Activated CD8-positive, alpha-beta T cell treated with anti-CD3 and anti-CD28 coated beads for 36 hours (primary cell): ENCODE measurements at regions of chr2 and their contacts with region 1.

Region 1: DNA sequence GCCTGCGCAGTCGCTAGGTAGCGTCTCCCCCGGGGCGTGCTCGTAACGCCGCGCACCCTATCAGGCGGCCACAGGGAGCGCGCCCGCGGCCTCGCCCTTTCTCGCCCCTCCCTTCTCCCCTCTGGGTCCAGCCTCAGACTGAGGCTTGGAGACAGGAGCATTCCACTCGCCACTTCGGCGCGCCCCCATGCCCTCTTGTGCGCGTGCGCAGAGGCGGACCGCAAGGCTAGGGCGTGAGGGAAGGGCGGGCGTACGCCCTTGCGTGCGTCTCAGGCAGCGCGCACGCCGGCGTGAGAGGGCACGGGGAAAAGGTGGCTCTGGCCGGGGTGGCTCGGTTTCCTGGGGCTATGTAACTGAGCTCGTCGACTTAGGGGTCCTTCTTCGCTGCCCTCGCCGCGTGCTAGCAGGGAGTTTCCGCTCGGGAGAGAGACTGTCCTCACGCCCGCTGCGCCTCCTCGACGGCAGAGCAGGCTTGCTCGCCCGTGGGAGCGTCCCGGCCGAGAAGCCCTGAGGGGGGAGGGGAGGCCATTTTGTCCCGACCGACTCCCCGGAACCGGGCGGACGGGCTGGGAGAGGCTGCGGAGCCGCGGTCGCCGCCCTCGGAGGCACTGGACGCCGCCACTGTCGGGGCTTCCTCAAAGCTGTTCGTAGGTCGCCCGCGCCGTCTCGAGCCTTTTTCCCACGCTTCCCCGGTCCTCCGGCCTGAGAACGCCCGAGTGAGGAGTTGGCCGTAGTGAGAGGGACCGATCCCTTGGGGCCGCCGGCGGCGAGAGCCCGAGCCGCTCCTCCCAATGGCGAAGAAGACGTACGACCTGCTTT is at the start of gene RAB10:
- DNase-seq: peak; percentile 99
- ATAC-seq: peak; percentile 96
- H3K4me3 Mint-ChIP-seq: peak within 1 kb of the TSS; percentile 94
- H3K27ac Mint-ChIP-seq: peak within 1 kb of the TSS; percentile 94
- H3K4me1 Mint-ChIP-seq: peaks cover 25% of the 10 kb centered on the region
- H3K27me3 Mint-ChIP-seq: no peaks in the 10 kb centered on the region
- CTCF ChIP-seq: no peak
- total RNA-seq, gene RAB10: 89.5 to 102 TPM

Region 2: GRCh38 chr2:26043862-26044696 is 10.1 kb after region 1 on chr2:
- CTCF ChIA-PET with region 1: interaction called, 3 read pairs
- POLR2A ChIA-PET with region 1: interaction called, 11 read pairs
- intact Hi-C with region 1: no loop called
- DNase-seq: peak; percentile 21
- ATAC-seq: peak; percentile 76
- H3K4me3 Mint-ChIP-seq: peak overlapping the region; percentile 45
- H3K27ac Mint-ChIP-seq: peak overlapping the region; percentile 72
- H3K4me1 Mint-ChIP-seq: peaks cover 56% of the 10 kb centered on the region
- H3K27me3 Mint-ChIP-seq: no peaks in the 10 kb centered on the region
- CTCF ChIP-seq: no peak

Region 3: GRCh38 chr2:26068602-26069298 is 34.7 kb after region 1 on chr2:
- CTCF ChIA-PET with region 1: no interaction called
- POLR2A ChIA-PET with region 1: interaction called, 12 read pairs
- intact Hi-C with region 1: loop called (anchors 5 kb)
- DNase-seq: peak; percentile 78
- ATAC-seq: peak; percentile 91
- H3K4me3 Mint-ChIP-seq: peak overlapping the region; percentile 12
- H3K27ac Mint-ChIP-seq: peak overlapping the region; percentile 89
- H3K4me1 Mint-ChIP-seq: peaks cover 45% of the 10 kb centered on the region
- H3K27me3 Mint-ChIP-seq: no peaks in the 10 kb centered on the region
- CTCF ChIP-seq: no peak

Region 4: GRCh38 chr2:26685989-26686839 is 652.2 kb after region 1 on chr2:
- CTCF ChIA-PET with region 1: no interaction called
- POLR2A ChIA-PET with region 1: no interaction called
- intact Hi-C with region 1: no loop called
- DNase-seq: no peak
- ATAC-seq: no peak
- H3K4me3 Mint-ChIP-seq: no peak overlapping the region
- H3K27ac Mint-ChIP-seq: no peak overlapping the region
- H3K4me1 Mint-ChIP-seq: no peaks in the 10 kb centered on the region
- H3K27me3 Mint-ChIP-seq: peaks cover 28% of the 10 kb centered on the region
- CTCF ChIP-seq: no peak